ENCODE measurements at regions of chr1 and their contacts with region 1.

Region 1: GRCh38 chr1:171801487-171801891 is 20.0 kb downstream of the METTL13 start:
- DNase-seq: peak in 1 of 2 experiments; percentile 55
- H3K4me3 ChIP-seq: no peak overlapping the region
- H3K4me3 Mint-ChIP-seq: no peak overlapping the region
- H3K27ac Mint-ChIP-seq: no peak overlapping the region
- H3K4me1 ChIP-seq: no peaks in the 10 kb centered on the region
- H3K4me1 Mint-ChIP-seq: no peaks in the 10 kb centered on the region
- H3K27me3 ChIP-seq: no peaks in the 10 kb centered on the region
- H3K27me3 Mint-ChIP-seq: no peaks in the 10 kb centered on the region
- CTCF ChIP-seq: peak; percentile 59 to 76

Region 2: DNA sequence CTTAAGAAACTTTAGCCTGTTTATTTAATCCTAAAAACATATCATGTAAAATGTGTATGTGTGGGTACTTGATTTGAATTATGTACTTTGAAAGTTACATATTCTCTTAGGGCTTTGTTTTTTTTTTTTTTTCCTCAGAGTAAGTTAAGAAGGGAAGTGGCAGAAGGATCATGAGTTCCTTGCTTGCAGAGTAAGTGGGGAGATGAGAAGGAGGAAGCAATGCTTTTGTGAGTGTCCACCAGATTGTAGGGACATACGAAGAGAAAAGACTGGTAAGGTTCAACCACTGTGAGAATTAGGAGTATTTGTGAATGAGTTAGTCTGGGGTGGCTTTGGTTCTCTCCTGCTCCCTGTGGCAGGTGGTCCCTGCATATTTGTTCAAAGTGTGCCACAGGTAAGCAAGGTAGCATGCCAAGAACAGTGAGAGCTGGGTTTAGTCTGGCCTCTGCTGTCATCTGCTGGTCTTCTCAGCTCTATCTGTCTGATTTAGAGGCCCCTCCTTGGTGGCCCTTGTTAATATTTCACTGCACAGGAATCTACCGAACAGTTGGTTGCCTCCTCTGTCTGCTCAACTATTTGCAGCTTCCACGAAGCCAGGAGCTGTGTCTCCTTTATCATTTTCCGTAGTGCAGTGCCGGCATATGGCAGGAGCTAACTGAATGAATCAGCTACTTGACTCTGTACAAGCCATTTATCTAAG is 49.3 kb after region 1 on chr1:
- CTCF ChIA-PET with region 1: interaction called, 17 read pairs
- POLR2A ChIA-PET with region 1: no interaction called
- intact Hi-C with region 1: loop called (anchors 1 kb)
- DNase-seq: peak; percentile 36 to 51
- H3K4me3 ChIP-seq: no peak overlapping the region
- H3K4me3 Mint-ChIP-seq: no peak overlapping the region
- H3K27ac Mint-ChIP-seq: no peak overlapping the region
- H3K4me1 ChIP-seq: no peaks in the 10 kb centered on the region
- H3K4me1 Mint-ChIP-seq: no peaks in the 10 kb centered on the region
- H3K27me3 ChIP-seq: no peaks in the 10 kb centered on the region
- H3K27me3 Mint-ChIP-seq: peaks cover 10% of the 10 kb centered on the region
- CTCF ChIP-seq: peak in 1 of 2 experiments; percentile 42

Region 3: DNA sequence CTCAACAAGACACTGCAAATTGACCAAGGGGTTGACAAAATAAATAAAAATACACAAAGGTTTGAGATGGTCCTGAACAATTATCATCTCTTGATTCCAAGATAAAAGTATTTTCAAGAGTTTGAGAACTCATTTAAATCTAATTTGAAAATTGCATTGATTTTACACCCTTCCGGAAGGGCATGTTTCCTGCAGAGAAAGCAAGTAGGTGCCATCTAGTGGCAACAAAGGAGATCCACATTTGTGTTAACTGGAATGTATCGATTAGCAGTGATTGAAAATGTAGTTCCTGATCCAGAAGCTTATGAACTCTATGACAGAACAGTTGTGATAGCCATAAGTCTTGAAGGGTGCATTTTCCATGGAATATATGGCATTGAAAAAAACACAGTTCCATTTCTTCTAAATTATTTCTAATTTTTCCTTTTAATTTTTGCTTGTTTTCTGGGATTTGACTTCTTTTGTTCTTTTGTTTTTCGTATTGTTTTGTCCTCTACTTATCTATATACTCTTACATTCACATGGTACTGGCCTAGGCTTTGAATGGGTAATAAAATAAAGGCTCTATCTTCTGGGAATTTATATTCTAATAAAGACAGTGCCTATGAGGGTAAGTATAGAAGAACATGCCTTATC is 183.5 kb after region 1 on chr1:
- CTCF ChIA-PET with region 1: interaction called, 26 read pairs
- POLR2A ChIA-PET with region 1: no interaction called
- intact Hi-C with region 1: loop called (anchors 1 kb)
- DNase-seq: peak in 1 of 2 experiments; percentile 24
- H3K4me3 ChIP-seq: no peak overlapping the region
- H3K4me3 Mint-ChIP-seq: no peak overlapping the region
- H3K27ac Mint-ChIP-seq: no peak overlapping the region
- H3K4me1 ChIP-seq: no peaks in the 10 kb centered on the region; the same call in 1 of the 2 replicates
- H3K4me1 Mint-ChIP-seq: peaks cover 1% of the 10 kb centered on the region
- H3K27me3 ChIP-seq: no peaks in the 10 kb centered on the region
- H3K27me3 Mint-ChIP-seq: peaks cover 3% of the 10 kb centered on the region
- CTCF ChIP-seq: peak; percentile 71 to 84